OCI-LY7 (cell line): ENCODE measurements at regions of chrX and their contacts with region 1.

Region 1: GRCh38 chrX:131633285-131633917 is 89.5 kb downstream of the OR13H1 start:
- DNase-seq: peak; percentile 51
- H3K4me3 ChIP-seq: no peak overlapping the region
- H3K27ac ChIP-seq: no peak overlapping the region
- H3K4me1 ChIP-seq: no peaks in the 10 kb centered on the region
- CTCF ChIP-seq: peak; percentile 78

Region 2: GRCh38 chrX:130975947-130976346 is 657.5 kb before region 1 on chrX:
- CTCF ChIA-PET with region 1: no interaction called
- POLR2A ChIA-PET with region 1: no interaction called
- intact Hi-C with region 1: loop called (anchors 5 kb)
- DNase-seq: peak; percentile 35
- H3K4me3 ChIP-seq: no peak overlapping the region
- H3K27ac ChIP-seq: no peak overlapping the region
- H3K4me1 ChIP-seq: no peaks in the 10 kb centered on the region
- CTCF ChIP-seq: peak; percentile 73

Region 3: GRCh38 chrX:130994671-130995070 is 638.7 kb before region 1 on chrX:
- CTCF ChIA-PET with region 1: no interaction called
- POLR2A ChIA-PET with region 1: no interaction called
- intact Hi-C with region 1: loop called (anchors 5 kb)
- DNase-seq: peak; percentile 22
- H3K4me3 ChIP-seq: no peak overlapping the region
- H3K27ac ChIP-seq: no peak overlapping the region
- H3K4me1 ChIP-seq: no peaks in the 10 kb centered on the region
- CTCF ChIP-seq: peak; percentile 81